ENCODE measurements at regions of chrX and their contacts with region 1.

Region 1: DNA sequence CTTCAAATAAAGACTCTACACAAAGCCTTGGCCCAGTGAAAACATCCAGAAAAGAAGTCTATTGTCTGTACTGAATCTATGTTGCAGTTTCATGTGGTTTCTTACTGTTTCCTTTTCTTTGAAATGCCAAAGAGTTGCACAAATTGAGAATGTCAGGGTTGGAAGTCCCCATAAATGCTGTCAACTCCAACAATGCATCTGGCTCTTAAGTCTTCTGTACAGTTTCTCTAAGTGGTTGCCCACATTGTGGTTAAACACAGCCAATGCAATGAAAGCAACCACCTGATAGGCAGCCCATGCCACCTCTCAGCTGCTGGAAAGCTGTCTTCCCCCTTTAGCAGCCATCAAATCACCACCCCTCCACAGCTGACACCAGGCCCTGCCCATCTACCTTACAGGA is 67.2 kb upstream of the C1GALT1C1 start:
- DNase-seq: peak; percentile 64
- ATAC-seq: peak; percentile 91
- H3K4me3 Mint-ChIP-seq: peak overlapping the region; percentile 12
- H3K27ac Mint-ChIP-seq: peak overlapping the region; percentile 91
- H3K4me1 Mint-ChIP-seq: peaks cover 18% of the 10 kb centered on the region
- H3K27me3 Mint-ChIP-seq: no peaks in the 10 kb centered on the region

Region 2: DNA sequence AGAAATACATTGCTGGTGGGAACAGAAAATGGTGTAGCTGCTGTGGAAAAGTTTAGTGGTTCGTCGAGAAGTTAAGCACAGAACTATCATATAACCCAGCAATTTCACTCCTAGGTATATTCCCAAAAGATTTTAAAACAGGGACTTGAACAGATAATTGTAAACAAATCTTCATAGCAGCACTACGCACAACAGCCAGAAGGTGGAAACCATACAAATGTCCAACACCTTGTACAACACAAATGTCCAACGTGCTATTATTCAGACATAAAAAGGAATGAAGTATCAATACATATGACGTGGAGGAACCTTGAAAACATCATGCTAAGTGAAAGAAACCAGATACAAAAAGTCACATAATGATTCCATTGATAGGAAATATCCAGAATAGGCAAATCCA is 174.2 kb before region 1 on chrX:
- CTCF ChIA-PET with region 1: no interaction called
- POLR2A ChIA-PET with region 1: no interaction called
- intact Hi-C with region 1: no loop called
- DNase-seq: no peak
- ATAC-seq: no peak
- H3K4me3 Mint-ChIP-seq: no peak overlapping the region
- H3K27ac Mint-ChIP-seq: no peak overlapping the region
- H3K4me1 Mint-ChIP-seq: no peaks in the 10 kb centered on the region
- H3K27me3 Mint-ChIP-seq: no peaks in the 10 kb centered on the region

Region 3: DNA sequence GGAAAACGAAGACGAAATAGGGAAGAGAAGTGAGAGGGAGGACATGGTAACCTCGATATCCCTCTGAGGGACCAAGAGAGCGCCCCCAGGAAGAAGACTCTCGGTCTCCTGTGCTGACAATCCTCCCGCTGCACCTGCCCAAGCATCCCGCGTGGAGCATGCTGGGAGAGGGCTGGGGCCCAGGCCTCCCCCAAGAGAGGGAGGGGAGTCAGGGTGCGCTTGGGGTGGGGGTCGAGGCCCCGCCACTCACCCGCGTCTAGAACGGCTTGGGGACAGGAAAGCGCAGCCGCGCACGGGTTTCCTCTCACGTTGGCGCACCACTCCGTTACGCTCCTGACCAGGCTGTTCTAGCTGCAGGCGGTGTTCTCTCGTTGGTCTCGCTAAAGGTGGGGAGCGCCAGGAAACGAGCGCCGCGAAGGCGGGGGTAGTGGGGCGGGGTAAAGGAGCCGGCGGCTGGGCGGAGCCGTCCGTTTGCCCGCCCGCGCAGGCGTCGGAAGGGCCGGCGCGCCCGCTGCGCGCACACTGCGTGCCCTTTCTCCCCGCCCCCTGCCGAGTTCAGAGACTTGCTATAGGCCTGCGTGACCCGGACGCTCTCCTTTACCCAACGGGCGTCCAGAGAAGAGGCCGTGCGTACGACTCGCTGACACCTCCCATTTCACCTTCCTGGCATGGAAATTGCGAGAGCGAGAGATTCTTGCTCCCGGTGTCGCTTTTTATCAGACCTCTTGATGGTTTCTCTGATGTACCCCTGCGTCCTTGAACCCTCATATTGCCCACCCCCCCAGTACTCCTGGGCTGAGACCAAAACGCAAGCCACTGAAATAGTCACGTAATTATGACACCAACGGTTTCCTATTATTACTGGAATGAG is 67.2 kb before region 1 on chrX and contains the start of gene C1GALT1C1:
- CTCF ChIA-PET with region 1: no interaction called
- POLR2A ChIA-PET with region 1: interaction called, 3 read pairs
- intact Hi-C with region 1: loop called (anchors 1 to 5 kb)
- DNase-seq: peak; percentile 95
- ATAC-seq: peak; percentile 95
- H3K4me3 Mint-ChIP-seq: peak within 1 kb of the TSS; percentile 91
- H3K27ac Mint-ChIP-seq: peak within 1 kb of the TSS; percentile 99
- H3K4me1 Mint-ChIP-seq: peaks cover 20% of the 10 kb centered on the region
- H3K27me3 Mint-ChIP-seq: no peaks in the 10 kb centered on the region
- total RNA-seq, gene C1GALT1C1: 15.1 to 18.2 TPM

Region 4: GRCh38 chrX:120672390-120672789 is 24.7 kb before region 1 on chrX:
- CTCF ChIA-PET with region 1: no interaction called
- POLR2A ChIA-PET with region 1: no interaction called
- intact Hi-C with region 1: loop called (anchors 2 kb)
- DNase-seq: no peak
- ATAC-seq: no peak
- H3K4me3 Mint-ChIP-seq: no peak overlapping the region
- H3K27ac Mint-ChIP-seq: no peak overlapping the region
- H3K4me1 Mint-ChIP-seq: peaks cover 20% of the 10 kb centered on the region
- H3K27me3 Mint-ChIP-seq: no peaks in the 10 kb centered on the region

Region 5: DNA sequence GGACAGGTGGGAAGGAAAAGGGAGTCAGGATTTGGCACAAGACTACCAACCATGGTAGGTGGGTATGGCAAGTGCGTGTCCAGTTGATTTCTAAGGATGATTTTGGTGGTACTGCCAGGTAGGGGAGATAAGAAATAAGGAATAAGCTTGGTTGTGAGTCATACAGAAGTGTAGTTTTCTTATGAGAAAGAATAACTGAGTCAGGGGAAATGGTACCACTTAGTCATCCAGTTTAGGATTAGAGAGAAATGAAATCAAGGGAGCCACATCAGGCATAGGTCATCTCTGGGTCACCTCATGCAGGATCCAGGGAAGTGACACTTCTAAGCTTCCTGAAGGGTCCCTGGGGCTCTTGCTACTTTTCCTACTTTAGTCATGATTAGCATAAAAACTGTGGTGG is 39.9 kb after region 1 on chrX:
- CTCF ChIA-PET with region 1: no interaction called
- POLR2A ChIA-PET with region 1: no interaction called
- intact Hi-C with region 1: loop called (anchors 1 to 5 kb)
- DNase-seq: no peak
- ATAC-seq: peak; percentile 89
- H3K4me3 Mint-ChIP-seq: no peak overlapping the region
- H3K27ac Mint-ChIP-seq: peak overlapping the region; percentile 74
- H3K4me1 Mint-ChIP-seq: peaks cover 23% of the 10 kb centered on the region
- H3K27me3 Mint-ChIP-seq: no peaks in the 10 kb centered on the region

Measured in activated CD4-positive, alpha-beta T cell treated with anti-CD3 and anti-CD28 coated beads for 36 hours (primary cell).